Activated B cell treated with CpG ODN at 0.5 μM for 24 hours (primary cell): ENCODE measurements at regions of chr6 and their contacts with region 1.

Region 1: DNA sequence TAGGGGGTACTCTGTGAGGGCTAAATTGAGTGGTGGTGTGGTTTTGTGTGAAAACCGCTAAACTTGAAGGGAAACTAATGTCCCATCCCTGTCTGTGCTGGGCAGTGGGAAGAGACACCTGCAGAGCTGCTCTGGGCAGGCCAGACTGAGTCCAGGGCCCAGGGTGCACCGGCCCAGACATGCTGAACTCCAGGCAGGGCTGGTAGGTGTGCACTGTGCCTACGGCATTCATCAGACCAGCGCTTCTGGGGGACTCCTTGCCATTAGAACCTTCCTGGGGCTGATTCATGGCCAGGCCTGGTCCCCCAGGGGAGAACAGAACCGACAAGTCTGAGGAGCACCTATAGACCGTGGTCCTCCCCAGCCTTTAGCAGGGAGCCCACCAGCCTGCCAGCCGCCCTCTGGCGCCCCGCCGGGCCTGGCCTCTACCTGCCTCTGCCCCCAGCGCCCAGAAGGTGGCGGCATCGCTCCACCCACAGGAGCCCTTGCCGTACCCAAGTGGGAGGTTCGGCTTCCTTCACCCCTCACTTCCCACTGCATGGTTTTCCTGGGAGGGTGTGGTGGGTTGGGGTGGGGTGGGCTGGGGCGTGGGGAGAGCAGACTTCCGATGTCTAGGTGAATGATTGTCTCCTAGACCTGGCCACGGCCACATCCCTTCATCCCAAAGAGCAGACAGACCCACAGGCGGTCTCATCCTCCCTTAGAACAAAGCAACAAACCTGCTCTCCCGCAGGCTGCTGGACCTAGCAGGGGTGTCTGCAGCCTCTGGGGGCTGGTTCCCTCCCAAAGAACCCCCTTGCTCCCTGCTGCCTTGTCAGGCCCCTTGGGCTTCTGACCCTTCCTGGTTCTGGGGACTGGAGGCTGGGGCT is 15.5 kb downstream of the CCDC167 start:
- DNase-seq: peak; percentile 72
- ATAC-seq: peak; percentile 97
- H3K4me3 Mint-ChIP-seq: no peak overlapping the region
- H3K27ac Mint-ChIP-seq: no peak overlapping the region
- H3K4me1 Mint-ChIP-seq: peaks cover 3% of the 10 kb centered on the region
- H3K27me3 Mint-ChIP-seq: no peaks in the 10 kb centered on the region
- CTCF ChIP-seq: no peak

Region 2: DNA sequence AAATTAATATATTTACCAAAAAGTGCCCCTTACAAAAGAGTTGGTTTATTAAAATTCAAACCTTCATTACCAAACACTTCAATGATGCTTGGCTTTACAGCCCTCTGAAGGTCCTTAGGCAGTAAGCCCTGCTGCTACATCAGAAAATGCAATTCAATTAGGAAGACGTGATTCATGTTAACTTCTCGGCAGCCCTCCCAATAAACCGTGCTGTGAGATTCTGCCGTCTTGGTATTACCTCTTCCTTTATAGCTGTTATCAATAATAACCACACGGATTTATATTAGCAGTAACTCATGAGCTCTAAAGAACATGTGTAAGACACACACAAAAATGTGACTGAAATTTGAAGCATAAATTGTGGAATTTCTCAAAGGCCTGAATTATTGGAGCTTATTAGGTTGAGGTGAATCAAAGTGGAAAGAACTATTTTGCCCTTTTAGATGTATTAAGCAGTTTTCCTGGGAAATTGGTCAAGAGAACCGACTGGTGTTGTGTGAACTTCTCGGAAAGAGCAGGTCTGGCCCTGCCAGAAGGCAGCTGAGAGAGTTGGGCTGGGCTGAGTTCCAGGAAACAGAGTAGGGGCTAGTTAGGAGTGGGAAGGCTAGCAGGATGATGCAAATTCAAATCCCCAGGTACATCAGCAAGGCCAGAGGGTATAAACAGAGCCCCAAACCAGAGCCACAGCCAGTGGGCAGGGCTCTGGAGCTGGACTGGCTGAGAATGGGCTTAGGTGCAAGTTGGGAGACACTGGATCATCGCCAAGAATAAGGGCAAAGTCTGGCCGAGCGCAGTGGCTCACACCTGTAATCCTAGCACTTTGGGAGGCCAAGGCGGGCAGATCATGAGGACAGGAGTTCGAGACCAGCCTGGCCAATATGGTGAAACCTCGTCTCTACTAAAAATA is 445.6 kb before region 1 on chr6:
- CTCF ChIA-PET with region 1: no interaction called
- POLR2A ChIA-PET with region 1: no interaction called
- intact Hi-C with region 1: no loop called
- DNase-seq: no peak
- ATAC-seq: no peak
- H3K4me3 Mint-ChIP-seq: no peak overlapping the region
- H3K27ac Mint-ChIP-seq: peak overlapping the region; percentile 76
- H3K4me1 Mint-ChIP-seq: peaks cover 32% of the 10 kb centered on the region
- H3K27me3 Mint-ChIP-seq: no peaks in the 10 kb centered on the region
- CTCF ChIP-seq: no peak

Region 3: GRCh38 chr6:37324131-37325033 is 159.8 kb before region 1 on chr6:
- CTCF ChIA-PET with region 1: no interaction called
- POLR2A ChIA-PET with region 1: no interaction called
- intact Hi-C with region 1: loop called (anchors 5 kb)
- DNase-seq: no peak
- ATAC-seq: no peak
- H3K4me3 Mint-ChIP-seq: no peak overlapping the region
- H3K27ac Mint-ChIP-seq: no peak overlapping the region
- H3K4me1 Mint-ChIP-seq: peaks cover 2% of the 10 kb centered on the region
- H3K27me3 Mint-ChIP-seq: no peaks in the 10 kb centered on the region
- CTCF ChIP-seq: no peak

Region 4: DNA sequence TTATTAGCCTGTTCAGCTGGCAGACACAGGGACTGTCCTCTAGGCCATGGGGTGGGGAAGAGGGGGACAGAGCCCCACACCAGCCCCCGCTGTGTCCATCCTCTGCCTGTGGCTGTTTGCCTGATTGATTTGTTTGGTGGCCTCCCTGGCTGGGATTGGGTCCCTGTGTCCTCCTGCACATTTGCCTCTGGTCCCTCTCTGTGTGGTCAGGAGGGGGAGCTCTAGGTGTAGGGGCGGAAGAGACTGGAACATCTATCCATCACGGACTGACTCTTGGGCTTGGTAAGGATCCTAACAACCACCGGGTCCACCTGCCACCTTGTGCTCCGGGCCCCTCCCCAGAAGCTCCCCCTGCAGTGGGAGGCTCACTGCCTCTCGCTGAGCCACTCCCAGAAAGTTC is 54.0 kb after region 1 on chr6:
- CTCF ChIA-PET with region 1: no interaction called
- POLR2A ChIA-PET with region 1: no interaction called
- intact Hi-C with region 1: loop called (anchors 1 kb)
- DNase-seq: no peak
- ATAC-seq: peak; percentile 27
- H3K4me3 Mint-ChIP-seq: no peak overlapping the region
- H3K27ac Mint-ChIP-seq: peak overlapping the region; percentile 26
- H3K4me1 Mint-ChIP-seq: peaks cover 16% of the 10 kb centered on the region
- H3K27me3 Mint-ChIP-seq: peaks cover 20% of the 10 kb centered on the region
- CTCF ChIP-seq: no peak

Region 5: DNA sequence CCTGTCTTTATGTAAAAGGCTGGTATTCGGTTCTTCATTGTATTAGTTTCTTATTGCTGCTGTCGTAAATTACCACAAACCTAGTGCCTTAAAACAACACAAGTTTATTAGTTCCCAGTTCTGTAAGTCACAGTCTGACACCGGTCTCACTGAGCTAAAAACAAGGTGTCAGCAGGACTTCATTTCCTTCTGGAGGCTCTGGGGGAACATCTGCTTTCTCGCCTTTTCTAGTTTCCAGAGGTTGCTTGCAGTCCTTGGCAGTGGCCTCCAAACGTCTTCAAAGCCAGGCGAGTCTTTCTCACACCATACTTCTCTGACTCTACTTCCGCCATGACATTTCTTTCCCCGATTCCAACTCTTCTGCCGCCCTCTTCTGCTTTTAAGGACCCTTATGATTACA is 292.4 kb after region 1 on chr6:
- CTCF ChIA-PET with region 1: no interaction called
- POLR2A ChIA-PET with region 1: interaction called, 12 read pairs
- intact Hi-C with region 1: no loop called
- DNase-seq: no peak
- ATAC-seq: no peak
- H3K4me3 Mint-ChIP-seq: no peak overlapping the region
- H3K27ac Mint-ChIP-seq: no peak overlapping the region
- H3K4me1 Mint-ChIP-seq: no peaks in the 10 kb centered on the region
- H3K27me3 Mint-ChIP-seq: peaks cover 5% of the 10 kb centered on the region
- CTCF ChIP-seq: no peak

Region 6: DNA sequence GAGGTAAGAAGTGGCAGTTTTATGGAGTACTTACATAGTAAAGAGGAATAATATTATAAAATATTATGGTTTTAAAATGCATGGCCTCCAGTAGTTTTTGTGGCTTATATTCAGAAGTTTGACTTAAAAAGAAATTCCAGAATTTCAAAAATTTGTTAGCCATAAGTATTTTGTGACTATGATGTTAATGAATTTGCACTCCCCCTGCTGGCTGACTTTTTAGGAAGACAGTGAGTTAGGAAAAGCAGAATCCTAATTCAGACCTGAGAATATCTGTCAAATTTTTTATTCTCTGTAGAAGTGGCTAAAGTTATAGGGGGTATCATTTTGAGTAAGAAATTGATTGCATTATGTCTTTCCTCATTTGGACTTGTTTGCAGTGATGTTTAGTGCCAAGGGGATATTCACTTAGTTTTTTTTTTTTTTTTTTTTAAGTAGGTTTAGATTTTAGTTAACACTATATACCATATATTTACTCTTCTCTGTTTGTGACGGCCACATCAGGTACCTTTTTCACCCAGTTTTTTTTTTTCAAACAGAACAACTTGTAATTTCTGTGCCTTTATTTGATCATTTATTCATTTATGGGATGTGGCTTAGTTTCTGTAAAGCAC is 376.2 kb after region 1 on chr6:
- CTCF ChIA-PET with region 1: no interaction called
- POLR2A ChIA-PET with region 1: no interaction called
- intact Hi-C with region 1: loop called (anchors 10 kb)
- DNase-seq: no peak
- ATAC-seq: no peak
- H3K4me3 Mint-ChIP-seq: no peak overlapping the region
- H3K27ac Mint-ChIP-seq: no peak overlapping the region
- H3K4me1 Mint-ChIP-seq: peaks cover 31% of the 10 kb centered on the region
- H3K27me3 Mint-ChIP-seq: no peaks in the 10 kb centered on the region
- CTCF ChIP-seq: no peak